Dorsolateral prefrontal cortex (tissue), 120 donors: ENCODE measurements at regions of chr13 and their contacts with region 1.

Region 1: DNA sequence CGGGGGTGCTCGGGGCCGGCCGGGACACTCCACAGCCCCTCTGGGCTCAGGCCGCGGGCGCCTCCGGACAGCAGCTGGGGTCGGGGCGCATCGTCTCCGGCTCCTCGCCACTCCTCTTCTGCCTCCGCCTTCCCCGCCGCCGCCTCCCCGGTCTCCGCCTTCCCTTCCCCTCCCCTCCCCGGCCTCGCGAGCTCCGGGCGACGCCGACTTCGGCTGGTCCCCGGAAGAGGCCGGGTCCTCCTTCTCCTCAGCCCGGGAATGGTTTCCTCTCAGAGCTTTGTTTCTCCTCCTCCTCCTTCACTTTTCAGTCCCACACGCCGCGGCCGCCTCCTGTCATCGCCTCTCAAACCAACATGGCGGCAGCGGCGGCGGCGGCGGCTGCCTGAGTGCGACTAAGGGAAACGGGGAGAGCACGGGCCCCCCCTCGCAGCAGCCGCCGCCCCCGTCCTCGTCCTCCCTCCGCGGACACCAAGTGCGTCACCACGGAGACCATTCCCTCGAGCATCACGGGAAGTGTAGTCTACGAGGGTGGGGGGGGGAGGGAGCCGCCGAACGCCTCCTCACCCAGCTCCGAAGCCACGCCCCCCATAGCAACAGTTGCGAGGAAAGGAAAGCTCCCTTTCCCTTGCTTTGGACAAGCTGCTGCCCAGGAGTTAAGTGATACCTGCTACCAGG is at the start of gene UBL3:
- DNase-seq: peak; percentile 92 to 98 (median 96)
- H3K4me3 ChIP-seq: peak within 1 kb of the TSS; percentile 57 to 97 (median 88)
- H3K27ac ChIP-seq: peak within 1 kb of the TSS; percentile 93 to 100 (median 99)
- H3K27me3 ChIP-seq: no peaks in the 10 kb centered on the region
- CTCF ChIP-seq: peak in 8 of 56 donors; percentile 6 to 26 (median 12)
- total RNA-seq, gene UBL3: 53.7 to 110 (median 72.5) TPM

Region 2: GRCh38 chr13:29595380-29596063 is 254.8 kb before region 1 on chr13 and contains the start of gene SLC7A1:
- intact Hi-C with region 1: loop called in 1 of 2 experiments (anchors 10 kb)
- DNase-seq: peak; percentile 50 to 86 (median 65)
- H3K4me3 ChIP-seq: peak within 1 kb of the TSS; percentile 62 to 94 (median 84)
- H3K27ac ChIP-seq: peak within 1 kb of the TSS in 57 of 59 donors; percentile 8 to 92 (median 77)
- H3K27me3 ChIP-seq: no peaks in the 10 kb centered on the region
- CTCF ChIP-seq: peak in 6 of 56 donors; percentile 6 to 19 (median 10)
- total RNA-seq, gene SLC7A1: 36.0 to 104 (median 59.3) TPM

Region 3: DNA sequence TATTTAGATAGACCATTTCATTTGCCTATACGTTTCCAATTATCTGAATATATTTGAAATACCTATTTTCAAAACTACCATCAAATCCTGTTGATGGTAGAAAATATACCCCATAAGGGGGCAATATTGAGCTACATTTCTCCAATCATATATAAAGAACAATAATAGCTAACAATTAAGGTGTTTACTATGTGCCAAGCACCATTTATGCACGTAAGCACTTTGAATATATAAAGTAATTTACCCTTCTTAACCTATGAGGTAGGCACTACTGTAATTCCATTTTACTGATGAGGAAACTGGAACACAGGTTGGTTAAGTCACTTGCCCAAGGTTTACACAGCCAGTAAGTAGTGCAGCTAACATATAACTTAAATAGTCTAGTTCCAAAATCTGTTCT is 79.1 kb before region 1 on chr13:
- intact Hi-C with region 1: loop called (anchors 5 kb)
- DNase-seq: no peak
- H3K4me3 ChIP-seq: no peak overlapping the region
- H3K27ac ChIP-seq: peak overlapping the region in 6 of 59 donors; percentile 1 to 33 (median 6)
- H3K27me3 ChIP-seq: no peaks in the 10 kb centered on the region
- CTCF ChIP-seq: peak; percentile 31 to 77 (median 61)

Region 4: GRCh38 chr13:30026093-30026492 is 175.7 kb after region 1 on chr13:
- intact Hi-C with region 1: loop called in 1 of 2 experiments (anchors 5 kb)
- DNase-seq: no peak
- H3K4me3 ChIP-seq: no peak overlapping the region
- H3K27ac ChIP-seq: no peak overlapping the region
- H3K27me3 ChIP-seq: no peaks in the 10 kb centered on the region
- CTCF ChIP-seq: no peak